CD4-positive, alpha-beta memory T cell (primary cell): ENCODE measurements at regions of chr14 and their contacts with region 1.

Region 1: DNA sequence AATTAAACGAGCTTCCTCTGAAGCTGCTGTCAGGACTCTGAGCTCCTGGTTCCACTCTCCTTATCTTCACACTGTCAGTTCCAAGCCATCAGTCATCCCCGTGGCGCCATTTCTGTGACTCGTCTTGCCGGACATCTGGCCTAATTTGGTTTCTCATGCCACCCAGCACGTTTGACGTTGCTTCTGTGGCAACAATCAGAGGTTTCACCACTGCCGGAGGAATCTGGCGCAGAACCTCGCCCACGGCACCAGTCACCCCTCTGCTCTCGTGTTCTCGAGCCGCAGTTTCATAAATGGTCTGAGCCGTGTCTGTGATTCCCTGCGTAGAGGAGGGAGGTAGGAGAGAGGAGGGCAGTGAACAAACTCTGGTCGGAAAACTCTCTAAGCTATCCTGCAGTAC is 29.7 kb downstream of the BDKRB1 start:
- DNase-seq: no peak
- H3K4me3 ChIP-seq: no peak overlapping the region
- H3K4me3 Mint-ChIP-seq: no peak overlapping the region
- H3K27ac ChIP-seq: no peak overlapping the region
- H3K27ac Mint-ChIP-seq: peak overlapping the region in 2 of 7 donors; percentile 15 to 20
- H3K4me1 ChIP-seq: no peaks in the 10 kb centered on the region
- H3K4me1 Mint-ChIP-seq: no peaks in the 10 kb centered on the region
- H3K27me3 ChIP-seq: no peaks in the 10 kb centered on the region
- H3K27me3 Mint-ChIP-seq: no peaks in the 10 kb centered on the region

Region 2: GRCh38 chr14:96167224-96168148 is 118.2 kb before region 1 on chr14:
- CTCF ChIA-PET with region 1: no interaction called
- POLR2A ChIA-PET with region 1: no interaction called
- intact Hi-C with region 1: no loop called
- DNase-seq: no peak
- H3K4me3 ChIP-seq: no peak overlapping the region
- H3K4me3 Mint-ChIP-seq: no peak overlapping the region
- H3K27ac ChIP-seq: no peak overlapping the region
- H3K27ac Mint-ChIP-seq: no peak overlapping the region
- H3K4me1 ChIP-seq: no peaks in the 10 kb centered on the region
- H3K4me1 Mint-ChIP-seq: peaks cover 0 to 1% (median 0%) of the 10 kb centered on the region in 4 donors
- H3K27me3 ChIP-seq: no peaks in the 10 kb centered on the region
- H3K27me3 Mint-ChIP-seq: peaks cover 0 to 2% of the 10 kb centered on the region in 2 donors

Region 3: GRCh38 chr14:96275177-96276112 is 10.2 kb before region 1 on chr14:
- CTCF ChIA-PET with region 1: interaction called, 19 read pairs
- POLR2A ChIA-PET with region 1: no interaction called
- intact Hi-C with region 1: no loop called
- DNase-seq: peak; percentile 45 to 59 (median 50)
- H3K4me3 ChIP-seq: no peak overlapping the region
- H3K4me3 Mint-ChIP-seq: no peak overlapping the region
- H3K27ac ChIP-seq: no peak overlapping the region
- H3K27ac Mint-ChIP-seq: no peak overlapping the region
- H3K4me1 ChIP-seq: no peaks in the 10 kb centered on the region
- H3K4me1 Mint-ChIP-seq: peaks cover 0 to 3% (median under 1%) of the 10 kb centered on the region in 4 donors
- H3K27me3 ChIP-seq: no peaks in the 10 kb centered on the region
- H3K27me3 Mint-ChIP-seq: no peaks in the 10 kb centered on the region